ENCODE measurements at regions of chr19 and their contacts with region 1.

Region 1: GRCh38 chr19:8355631-8356402 is 8.1 kb upstream of the ANGPTL4 start:
- DNase-seq: no peak
- ATAC-seq: peak in 5 of 8 donors; percentile 40 to 85 (median 55)
- H3K4me3 ChIP-seq: no peak overlapping the region
- H3K27ac ChIP-seq: peak overlapping the region in 1 of 10 donors; percentile 73
- H3K4me1 ChIP-seq: peaks cover 3 to 44% (median 11%) of the 10 kb centered on the region in 9 donors
- H3K27me3 ChIP-seq: peaks cover 0 to 10% (median 0%) of the 10 kb centered on the region in 7 donors
- CTCF ChIP-seq: no peak

Region 2: GRCh38 chr19:8389891-8390616 is 34.2 kb after region 1 on chr19 and contains the start of gene RAB11B:
- intact Hi-C with region 1: loop called in 4 of 10 experiments (anchors 5 kb)
- DNase-seq: peak; percentile 99 to 100
- ATAC-seq: peak; percentile 88 to 95 (median 94)
- H3K4me3 ChIP-seq: peak within 1 kb of the TSS; percentile 66 to 100 (median 82)
- H3K27ac ChIP-seq: peak within 1 kb of the TSS; percentile 99 to 100 (median 100)
- H3K4me1 ChIP-seq: peaks cover 29 to 60% (median 48%) of the 10 kb centered on the region in 9 donors
- H3K27me3 ChIP-seq: no peaks in the 10 kb centered on the region
- CTCF ChIP-seq: no peak
- total RNA-seq, gene RAB11B: 140 to 178 (median 159) TPM

Region 3: DNA sequence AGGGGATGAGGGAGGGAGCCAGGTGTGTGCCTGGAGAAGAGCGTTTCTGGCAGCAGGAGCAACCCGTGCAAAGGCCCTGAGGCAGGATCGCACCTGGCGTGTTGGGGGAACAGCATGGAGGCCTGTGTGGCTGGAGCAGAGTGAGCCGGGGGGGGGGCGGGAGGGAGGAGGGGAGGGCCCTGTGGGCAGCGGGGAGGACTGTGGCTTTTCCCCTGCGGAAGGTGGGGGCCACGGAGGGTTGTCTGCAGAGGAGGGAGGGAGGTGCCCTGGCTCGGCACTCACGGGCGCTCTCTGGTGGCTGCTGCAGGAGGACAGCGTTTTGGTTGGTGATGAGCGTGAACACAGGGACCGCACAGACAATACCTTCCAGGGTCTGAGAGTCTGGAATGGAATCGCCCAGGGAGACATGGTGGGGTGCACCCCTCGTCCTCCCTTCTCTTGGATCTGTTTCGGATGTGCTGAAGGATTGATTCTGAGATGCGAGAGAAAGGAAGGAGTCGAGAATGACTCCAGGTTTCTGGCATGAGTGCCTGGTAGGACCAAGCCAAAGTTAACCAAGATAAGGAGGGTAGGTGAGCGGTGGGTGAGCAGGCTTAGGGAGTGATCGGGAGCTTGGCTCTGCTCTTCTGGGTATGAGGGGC is 40.9 kb after region 1 on chr19:
- intact Hi-C with region 1: loop called in 9 of 10 experiments (anchors 1 to 10 kb)
- DNase-seq: peak; percentile 55 to 79
- ATAC-seq: peak; percentile 5 to 59 (median 36)
- H3K4me3 ChIP-seq: no peak overlapping the region
- H3K27ac ChIP-seq: peak overlapping the region in 4 of 10 donors; percentile 15 to 100 (median 50)
- H3K4me1 ChIP-seq: peaks cover 34 to 71% (median 63%) of the 10 kb centered on the region in 9 donors
- H3K27me3 ChIP-seq: no peaks in the 10 kb centered on the region
- CTCF ChIP-seq: peak; percentile 45 to 78 (median 66)

Region 4: GRCh38 chr19:8404391-8405151 is 48.8 kb after region 1 on chr19:
- intact Hi-C with region 1: loop called in 4 of 10 experiments (anchors 5 to 10 kb)
- DNase-seq: no peak
- ATAC-seq: peak in 7 of 8 donors; percentile 30 to 71 (median 65)
- H3K4me3 ChIP-seq: no peak overlapping the region
- H3K27ac ChIP-seq: peak overlapping the region in 7 of 10 donors; percentile 5 to 75 (median 47)
- H3K4me1 ChIP-seq: peaks cover 0 to 12% (median 8%) of the 10 kb centered on the region in 9 donors
- H3K27me3 ChIP-seq: no peaks in the 10 kb centered on the region
- CTCF ChIP-seq: no peak

Region 5: GRCh38 chr19:8505680-8506401 is 150.0 kb after region 1 on chr19:
- intact Hi-C with region 1: loop called (anchors 1 to 10 kb)
- DNase-seq: peak; percentile 78 to 86
- ATAC-seq: peak; percentile 85 to 92 (median 90)
- H3K4me3 ChIP-seq: peak overlapping the region; percentile 23 to 70 (median 62)
- H3K27ac ChIP-seq: peak overlapping the region in 8 of 10 donors; percentile 13 to 58 (median 35)
- H3K4me1 ChIP-seq: peaks cover 2 to 55% (median 14%) of the 10 kb centered on the region in 9 donors
- H3K27me3 ChIP-seq: no peaks in the 10 kb centered on the region
- CTCF ChIP-seq: peak; percentile 80 to 97 (median 89)

Region 6: GRCh38 chr19:8580710-8581281 is 225.0 kb after region 1 on chr19:
- intact Hi-C with region 1: loop called in 3 of 10 experiments (anchors 10 kb)
- DNase-seq: peak; percentile 80 to 82
- ATAC-seq: peak; percentile 60 to 77 (median 66)
- H3K4me3 ChIP-seq: no peak overlapping the region
- H3K27ac ChIP-seq: no peak overlapping the region
- H3K4me1 ChIP-seq: peaks cover 0 to 38% (median 10%) of the 10 kb centered on the region in 9 donors
- H3K27me3 ChIP-seq: peaks cover 0 to 27% (median 13%) of the 10 kb centered on the region in 7 donors
- CTCF ChIP-seq: peak; percentile 99 to 100 (median 99)